ENCODE measurements at regions of chr14 and their contacts with region 1.

Region 1: GRCh38 chr14:65412032-65412846 is at the start of gene FUT8:
- DNase-seq: peak; percentile 72
- H3K4me3 ChIP-seq: peak within 1 kb of the TSS; percentile 84
- CTCF ChIP-seq: peak; percentile 81

Region 2: GRCh38 chr14:65222440-65222858 is 189.8 kb before region 1 on chr14:
- CTCF ChIA-PET with region 1: interaction called, 51 read pairs
- POLR2A ChIA-PET with region 1: interaction called, 4 read pairs
- DNase-seq: no peak
- H3K4me3 ChIP-seq: no peak overlapping the region
- CTCF ChIP-seq: peak; percentile 77

Region 3: DNA sequence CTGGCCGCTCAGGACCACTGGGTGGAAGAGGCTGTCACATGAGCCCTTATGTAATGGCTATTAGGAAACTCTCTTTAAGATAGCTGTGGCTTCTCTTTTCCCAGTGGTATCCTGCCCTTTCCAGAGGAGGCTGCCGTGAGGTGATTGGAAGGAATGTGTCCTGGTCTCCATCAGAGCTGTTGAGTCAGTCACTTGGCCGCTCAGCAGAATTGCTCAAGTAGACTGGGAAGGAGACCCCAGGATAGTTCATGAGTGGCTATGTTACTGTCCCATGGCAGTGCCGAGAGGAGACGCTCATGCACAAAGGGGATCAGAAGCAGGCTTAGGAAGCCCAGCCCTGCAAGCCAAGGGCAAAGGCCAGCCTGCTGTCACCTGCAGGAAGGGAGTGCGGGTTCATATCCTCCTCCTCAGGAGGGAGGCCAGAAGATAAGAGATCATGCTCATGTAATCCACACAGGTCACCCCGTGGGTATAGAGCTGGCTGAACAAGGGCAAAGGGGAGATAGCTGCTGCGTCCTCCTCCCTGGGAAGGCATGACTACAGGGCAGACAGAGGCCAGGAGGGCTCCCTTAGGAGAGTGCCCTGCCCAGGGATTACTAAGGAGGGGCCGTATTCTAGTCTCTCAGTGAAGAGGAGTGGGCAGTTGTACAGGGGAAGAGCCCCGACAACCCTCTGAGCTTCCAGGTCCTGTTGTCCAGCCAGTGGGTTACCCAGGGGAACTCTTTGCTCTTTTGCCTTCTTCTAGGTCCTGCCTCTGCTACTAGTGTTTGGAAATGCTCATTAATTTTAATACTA is 172.9 kb before region 1 on chr14:
- CTCF ChIA-PET with region 1: interaction called, 4 read pairs
- POLR2A ChIA-PET with region 1: interaction called, 10 read pairs
- DNase-seq: peak; percentile 57
- H3K4me3 ChIP-seq: no peak overlapping the region
- CTCF ChIP-seq: no peak

Region 4: GRCh38 chr14:65428691-65429090 is 16.5 kb after region 1 on chr14:
- CTCF ChIA-PET with region 1: interaction called, 13 read pairs
- POLR2A ChIA-PET with region 1: no interaction called
- DNase-seq: no peak
- H3K4me3 ChIP-seq: no peak overlapping the region
- CTCF ChIP-seq: no peak

Region 5: DNA sequence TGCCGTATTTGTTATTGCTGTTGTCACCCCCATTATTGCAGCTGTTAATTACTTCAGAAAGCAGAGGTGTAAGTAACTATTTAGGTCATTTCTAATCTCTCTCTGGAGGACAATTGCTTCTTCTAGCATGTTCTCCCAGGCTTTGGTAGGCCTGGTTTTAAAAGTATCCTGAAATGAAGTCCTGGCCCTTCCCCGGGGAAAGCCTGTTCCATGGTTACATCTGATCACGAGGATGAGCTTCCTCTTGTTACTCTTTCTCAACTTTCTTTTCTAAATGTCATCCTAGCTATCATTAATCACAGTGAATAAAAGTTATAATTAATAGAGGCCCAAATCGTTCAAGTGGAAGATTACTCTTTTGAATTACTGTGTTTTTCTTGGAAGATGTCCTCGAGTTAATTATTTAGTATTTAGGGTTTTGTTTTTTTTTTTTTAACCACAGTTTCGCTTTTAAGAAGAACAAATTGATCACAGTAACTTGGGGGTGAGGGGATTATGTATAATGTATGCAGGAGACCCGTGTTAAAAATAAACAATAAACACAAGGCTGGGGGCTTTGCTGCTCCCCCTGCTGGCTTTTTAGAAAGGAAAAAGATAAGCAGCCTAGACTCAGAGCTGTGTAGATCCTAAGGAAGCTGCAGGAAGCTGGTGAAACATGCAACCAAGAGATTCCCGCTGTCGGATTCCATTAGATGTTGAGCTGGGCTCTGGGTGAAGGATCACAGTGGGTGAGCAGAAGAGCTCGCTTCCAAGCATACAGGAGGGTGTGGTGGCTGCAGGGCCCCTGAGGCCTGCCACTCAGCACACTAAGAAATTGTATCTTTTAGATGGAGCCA is 420.4 kb after region 1 on chr14:
- CTCF ChIA-PET with region 1: interaction called, 43 read pairs
- POLR2A ChIA-PET with region 1: no interaction called
- DNase-seq: no peak
- H3K4me3 ChIP-seq: no peak overlapping the region
- CTCF ChIP-seq: peak; percentile 17

Region 6: DNA sequence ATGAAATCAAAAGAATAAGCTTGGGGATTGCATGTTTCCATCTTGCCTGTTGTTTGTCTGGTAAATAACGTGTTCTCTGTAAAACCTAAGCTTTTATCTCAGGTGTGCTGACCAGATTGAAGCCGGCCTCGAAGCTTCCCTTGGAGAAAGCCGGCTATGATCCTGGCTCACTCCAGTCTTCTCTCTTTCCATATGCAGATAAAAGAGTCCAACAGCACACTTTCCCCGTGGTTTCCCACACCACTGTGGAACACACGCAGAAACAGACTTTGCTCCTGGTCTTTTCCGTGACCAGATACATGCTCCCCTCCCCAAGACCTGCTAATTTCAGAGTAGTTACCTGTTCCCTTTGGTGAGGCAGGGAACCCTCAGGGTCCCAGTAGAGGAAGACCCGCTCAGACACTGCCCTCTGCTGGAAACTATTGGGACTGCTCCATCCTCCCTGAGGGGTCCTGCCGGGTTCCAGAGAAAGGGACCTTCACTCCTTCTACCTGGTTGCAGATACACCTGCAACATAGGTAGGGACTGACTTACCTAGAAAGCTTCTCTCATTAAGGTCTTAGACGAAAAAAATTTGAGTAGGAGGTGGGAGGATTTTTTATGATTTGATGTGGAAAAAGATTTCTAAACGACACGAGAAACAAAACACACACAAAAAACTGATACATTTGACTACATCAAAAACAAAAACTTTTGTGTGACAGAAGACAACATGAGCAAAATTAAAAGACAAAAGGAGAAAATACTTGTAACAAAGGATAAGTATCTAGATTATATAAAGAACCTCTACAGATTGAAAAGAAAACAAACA is 658.5 kb after region 1 on chr14:
- CTCF ChIA-PET with region 1: interaction called, 14 read pairs
- POLR2A ChIA-PET with region 1: no interaction called
- DNase-seq: no peak
- H3K4me3 ChIP-seq: no peak overlapping the region
- CTCF ChIP-seq: peak; percentile 85